WTC11 (cell line): ENCODE measurements at regions of chr3 and their contacts with region 1.

Region 1: DNA sequence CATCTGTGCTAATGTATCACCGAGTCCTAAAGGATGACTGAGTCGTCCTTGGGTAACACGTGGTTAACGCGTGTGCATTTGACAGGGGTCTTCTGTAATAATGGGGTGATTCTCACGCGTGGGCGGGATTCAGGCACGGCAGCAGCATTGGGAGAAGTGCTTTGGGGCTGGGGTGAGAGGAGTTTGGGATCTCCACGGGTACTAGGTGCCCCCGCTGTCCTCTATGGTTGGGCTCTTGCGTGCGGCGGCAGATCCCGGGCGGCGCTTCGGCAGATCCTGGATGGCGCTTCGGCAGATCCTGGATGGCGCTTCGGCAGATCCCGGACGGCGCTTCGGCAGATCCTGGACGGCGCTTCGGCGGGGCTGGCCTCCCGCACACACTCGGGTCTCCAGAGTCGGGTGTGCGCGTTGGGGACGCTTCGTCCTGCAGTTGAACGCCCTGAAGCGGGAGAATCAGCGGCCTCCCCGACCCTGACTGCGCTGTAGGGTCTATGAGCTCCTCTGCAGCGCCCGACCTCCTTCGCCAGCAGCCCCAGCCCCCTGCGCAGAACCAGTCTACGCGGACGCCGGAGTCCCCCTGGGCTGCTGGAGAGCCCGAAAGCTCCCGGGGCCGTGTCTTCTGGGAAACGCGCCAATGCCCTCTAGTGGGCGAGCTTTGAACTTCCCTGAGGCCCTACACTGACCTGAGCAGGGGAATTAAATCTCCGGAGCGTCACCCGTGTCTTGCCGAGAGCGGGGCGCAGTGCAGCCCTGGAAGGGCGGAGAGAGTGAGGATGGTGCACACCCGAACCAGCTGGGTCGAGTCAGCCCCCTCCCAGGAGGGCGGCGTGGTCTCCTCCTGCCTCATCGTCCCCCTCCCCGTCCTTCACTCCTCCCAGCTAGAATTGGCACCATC is 48.1 kb upstream of the EPHB3 start:
- DNase-seq: peak; percentile 95
- ATAC-seq: peak; percentile 95
- H3K4me3 Mint-ChIP-seq: peak overlapping the region; percentile 71
- H3K27ac Mint-ChIP-seq: no peak overlapping the region
- H3K4me1 Mint-ChIP-seq: peaks cover 30% of the 10 kb centered on the region
- H3K27me3 Mint-ChIP-seq: peaks cover 54% of the 10 kb centered on the region
- CTCF ChIP-seq: peak; percentile 79

Region 2: DNA sequence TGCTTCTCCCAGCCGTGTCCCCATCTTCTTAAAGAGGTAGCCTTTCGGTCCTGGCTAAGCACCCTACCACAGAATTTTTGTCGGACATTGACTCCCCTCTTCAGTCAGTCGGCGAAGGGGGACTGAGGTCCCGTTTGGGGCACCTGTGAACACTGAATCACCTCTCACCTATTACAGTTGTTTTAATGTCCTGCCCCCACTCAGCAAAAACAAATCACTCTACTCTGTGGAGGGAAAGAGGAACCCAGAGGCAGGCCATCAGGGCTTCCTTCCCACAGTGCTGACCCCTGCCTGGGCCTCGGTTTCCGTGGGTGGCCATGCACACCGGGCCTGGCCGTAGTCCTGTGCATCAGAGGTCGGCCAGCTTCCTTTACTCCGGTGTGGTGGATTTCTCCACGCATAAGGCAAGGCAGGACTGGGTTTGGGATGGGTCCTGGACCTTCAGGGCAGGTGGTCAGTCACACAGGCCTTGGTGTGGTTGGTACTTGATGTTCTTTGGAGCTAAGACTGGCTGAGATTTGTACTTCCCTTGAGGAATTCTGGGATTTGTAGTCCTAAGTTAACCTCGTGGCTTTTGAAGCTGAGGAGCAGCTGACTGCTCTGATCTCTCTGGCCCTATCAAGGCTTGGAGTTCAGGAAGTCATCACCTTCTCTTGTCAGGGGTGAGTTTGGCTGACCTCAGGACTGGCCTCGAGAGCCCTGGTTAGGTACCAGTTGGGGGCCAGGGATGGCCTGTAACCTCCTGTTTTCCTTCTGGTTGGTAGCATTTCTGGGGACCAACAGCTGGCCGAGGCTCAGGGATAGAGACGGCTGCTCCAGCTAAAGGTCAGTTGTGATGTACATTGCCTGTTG is 176.8 kb before region 1 on chr3:
- CTCF ChIA-PET with region 1: interaction called, 10 read pairs
- POLR2A ChIA-PET with region 1: no interaction called
- DNase-seq: no peak
- ATAC-seq: peak; percentile 6
- H3K4me3 Mint-ChIP-seq: peak overlapping the region; percentile 92
- H3K27ac Mint-ChIP-seq: peak overlapping the region; percentile 93
- H3K4me1 Mint-ChIP-seq: peaks cover 40% of the 10 kb centered on the region
- H3K27me3 Mint-ChIP-seq: no peaks in the 10 kb centered on the region
- CTCF ChIP-seq: no peak

Region 3: DNA sequence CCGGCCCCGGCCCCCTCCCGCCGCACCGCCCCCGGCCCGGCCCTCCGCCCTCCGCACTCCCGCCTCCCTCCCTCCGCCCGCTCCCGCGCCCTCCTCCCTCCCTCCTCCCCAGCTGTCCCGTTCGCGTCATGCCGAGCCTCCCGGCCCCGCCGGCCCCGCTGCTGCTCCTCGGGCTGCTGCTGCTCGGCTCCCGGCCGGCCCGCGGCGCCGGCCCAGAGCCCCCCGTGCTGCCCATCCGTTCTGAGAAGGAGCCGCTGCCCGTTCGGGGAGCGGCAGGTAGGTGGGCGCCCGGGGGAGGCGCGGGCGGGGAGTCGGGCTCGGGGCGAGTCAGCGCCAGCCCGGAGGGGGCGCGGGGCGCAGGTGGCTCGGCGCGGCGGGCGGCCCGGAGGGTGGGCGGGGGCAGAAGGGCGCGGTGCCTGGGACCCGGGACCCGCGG is 133.3 kb before region 1 on chr3:
- CTCF ChIA-PET with region 1: interaction called, 11 read pairs
- POLR2A ChIA-PET with region 1: no interaction called
- DNase-seq: peak; percentile 74
- ATAC-seq: peak; percentile 17
- H3K4me3 Mint-ChIP-seq: no peak overlapping the region
- H3K27ac Mint-ChIP-seq: no peak overlapping the region
- H3K4me1 Mint-ChIP-seq: peaks cover 43% of the 10 kb centered on the region
- H3K27me3 Mint-ChIP-seq: peaks cover 63% of the 10 kb centered on the region
- CTCF ChIP-seq: no peak

Region 4: GRCh38 chr3:184469423-184469822 is 44.1 kb before region 1 on chr3:
- CTCF ChIA-PET with region 1: interaction called, 72 read pairs
- POLR2A ChIA-PET with region 1: interaction called, 4 read pairs
- DNase-seq: peak; percentile 86
- ATAC-seq: peak; percentile 89
- H3K4me3 Mint-ChIP-seq: no peak overlapping the region
- H3K27ac Mint-ChIP-seq: no peak overlapping the region
- H3K4me1 Mint-ChIP-seq: peaks cover 11% of the 10 kb centered on the region; the same call in 1 of the 2 replicates
- H3K27me3 Mint-ChIP-seq: no peaks in the 10 kb centered on the region
- CTCF ChIP-seq: peak; percentile 59

Region 5: GRCh38 chr3:184491867-184492615 is 21.5 kb before region 1 on chr3:
- CTCF ChIA-PET with region 1: interaction called, 15 read pairs
- POLR2A ChIA-PET with region 1: no interaction called
- DNase-seq: no peak
- ATAC-seq: peak; percentile 57
- H3K4me3 Mint-ChIP-seq: peak overlapping the region; percentile 73
- H3K27ac Mint-ChIP-seq: no peak overlapping the region
- H3K4me1 Mint-ChIP-seq: peaks cover 3% of the 10 kb centered on the region; the same call in 1 of the 2 replicates
- H3K27me3 Mint-ChIP-seq: peaks cover 64% of the 10 kb centered on the region
- CTCF ChIP-seq: no peak